AG04450 (cell line): ENCODE measurements at regions of chr18 and their contacts with region 1.

Region 1: GRCh38 chr18:12890506-12890905 is 6.5 kb upstream of the PTPN2 start:
- DNase-seq: no peak
- H3K4me3 ChIP-seq: no peak overlapping the region
- H3K27ac ChIP-seq: peak overlapping the region; percentile 11
- H3K27me3 ChIP-seq: peaks cover 3% of the 10 kb centered on the region
- CTCF ChIP-seq: no peak

Region 2: DNA sequence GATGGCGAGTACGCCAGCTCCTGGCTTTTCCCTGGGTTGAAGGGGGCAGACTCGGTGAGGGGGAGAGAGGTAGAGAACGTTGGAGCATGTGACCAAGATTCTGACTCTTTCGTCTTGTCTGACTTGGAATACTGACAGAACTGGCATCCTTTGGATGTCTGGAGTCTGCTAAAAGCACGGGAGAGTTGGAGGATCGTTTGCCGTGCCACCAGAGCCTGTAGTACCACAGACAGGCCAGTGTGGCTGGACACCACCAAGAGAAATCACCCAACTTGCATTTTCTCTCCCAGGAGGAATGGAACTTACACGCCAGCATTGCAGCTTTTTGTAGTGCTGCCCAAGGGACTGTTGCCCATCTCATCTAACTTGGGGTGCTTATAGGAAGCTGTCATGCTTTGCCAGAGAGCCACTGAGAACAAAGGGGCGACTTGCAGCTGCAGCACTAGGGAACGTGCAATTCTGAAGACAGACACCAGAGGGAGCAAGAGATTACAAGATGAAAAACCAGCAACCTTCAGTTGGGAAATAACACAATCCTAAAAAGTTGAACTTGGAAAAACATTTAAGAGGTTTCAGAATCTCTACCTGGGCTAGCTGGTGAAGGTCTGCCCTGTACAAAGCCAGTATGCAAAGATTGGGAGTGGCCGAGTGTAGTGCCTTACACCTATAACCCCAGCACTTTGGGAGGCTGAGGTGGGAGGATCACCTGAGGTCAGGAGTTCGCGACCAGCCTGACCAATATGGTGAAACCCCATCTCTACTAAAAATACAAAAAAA is 163.5 kb before region 1 on chr18:
- CTCF ChIA-PET with region 1: interaction called, 17 read pairs
- POLR2A ChIA-PET with region 1: no interaction called
- DNase-seq: peak; percentile 60
- H3K4me3 ChIP-seq: no peak overlapping the region
- H3K27ac ChIP-seq: no peak overlapping the region
- H3K27me3 ChIP-seq: no peaks in the 10 kb centered on the region
- CTCF ChIP-seq: peak; percentile 89

Region 3: DNA sequence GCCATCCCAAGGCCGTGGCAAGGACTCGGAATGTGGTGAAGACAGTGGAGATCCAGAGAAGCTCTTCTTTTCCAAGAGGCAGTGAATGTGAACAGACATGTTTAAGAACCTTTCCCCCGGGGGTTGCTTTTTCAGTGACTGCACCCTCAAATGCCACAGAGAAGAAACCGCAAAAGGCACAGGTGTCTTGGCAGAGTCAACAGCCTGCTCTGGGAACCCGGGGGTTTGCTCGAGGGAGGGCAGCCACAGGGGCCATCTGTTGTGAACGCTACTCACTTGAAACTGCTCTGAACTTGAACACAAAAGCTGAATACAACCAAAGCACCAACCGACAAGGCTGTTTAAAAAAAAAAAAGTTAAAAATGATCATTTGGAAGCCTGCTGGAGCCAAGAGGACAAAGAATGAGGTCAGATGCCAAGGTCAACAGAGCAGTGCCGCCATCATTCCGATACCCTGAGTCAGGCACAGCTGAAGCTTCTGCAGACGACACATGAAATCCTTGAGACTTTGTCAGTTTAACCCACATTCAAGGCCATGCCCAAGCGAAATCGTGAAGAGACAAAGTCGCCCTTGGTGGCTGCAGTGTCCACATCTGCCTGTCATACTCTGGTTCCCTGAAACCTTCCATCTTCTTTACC is 140.3 kb before region 1 on chr18:
- CTCF ChIA-PET with region 1: interaction called, 126 read pairs
- POLR2A ChIA-PET with region 1: no interaction called
- DNase-seq: no peak
- H3K4me3 ChIP-seq: no peak overlapping the region
- H3K27ac ChIP-seq: no peak overlapping the region
- H3K27me3 ChIP-seq: no peaks in the 10 kb centered on the region
- CTCF ChIP-seq: no peak

Region 4: DNA sequence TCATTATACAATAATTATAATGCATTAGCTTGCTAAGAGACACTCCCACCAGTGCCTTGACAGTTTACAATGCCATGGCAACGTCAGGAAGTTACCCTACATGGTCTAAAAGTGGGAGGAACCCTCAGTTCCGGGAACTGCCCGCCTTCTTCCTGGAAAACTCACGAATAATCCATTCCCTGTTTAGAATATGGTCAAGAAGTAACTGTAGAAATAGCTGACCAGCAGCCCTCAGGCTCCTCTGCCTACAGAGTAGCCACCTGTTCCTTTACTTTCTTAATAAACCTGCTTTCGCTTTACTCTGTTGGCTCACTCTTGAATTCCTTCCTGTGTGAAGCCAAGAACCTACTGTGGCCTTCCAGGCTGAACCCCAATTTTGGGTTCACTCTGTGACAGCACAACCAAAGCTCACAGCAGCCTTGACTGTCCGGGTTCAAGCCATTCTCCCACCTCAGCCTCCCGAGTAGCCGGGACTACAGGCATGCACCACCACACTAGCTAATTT is 13.6 kb after region 1 on chr18:
- CTCF ChIA-PET with region 1: interaction called, 20 read pairs
- POLR2A ChIA-PET with region 1: no interaction called
- DNase-seq: no peak
- H3K4me3 ChIP-seq: no peak overlapping the region
- H3K27ac ChIP-seq: no peak overlapping the region
- H3K27me3 ChIP-seq: peaks cover 11% of the 10 kb centered on the region
- CTCF ChIP-seq: no peak

Region 5: DNA sequence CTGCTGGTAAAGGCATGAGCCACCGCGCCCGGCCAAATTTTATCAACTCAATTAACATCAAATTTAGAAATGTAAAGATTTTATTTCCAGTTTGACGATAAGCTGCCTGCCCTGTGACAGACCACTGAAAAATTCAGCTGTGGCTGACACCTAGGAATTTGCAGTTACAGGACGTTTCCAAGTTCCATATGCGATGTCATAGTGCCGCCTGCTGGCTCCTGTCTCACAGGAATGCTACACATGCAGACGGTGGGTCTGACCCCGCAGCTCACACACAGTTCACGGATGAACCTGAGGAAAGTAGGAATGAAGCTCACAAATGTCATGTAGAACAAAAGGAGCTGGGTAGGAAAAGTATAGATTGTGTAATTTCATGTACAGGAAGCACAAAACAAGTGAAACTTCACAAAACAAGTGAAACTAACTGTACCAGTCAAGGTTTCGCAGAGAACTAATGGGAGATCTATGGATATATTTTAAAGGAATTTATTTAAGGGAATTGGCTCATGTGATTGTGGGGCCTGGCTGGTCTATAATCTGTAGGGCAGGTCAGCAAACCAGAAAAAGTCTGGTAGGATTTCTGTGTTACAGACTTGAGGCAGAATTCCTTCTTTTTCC is 44.1 kb after region 1 on chr18:
- CTCF ChIA-PET with region 1: interaction called, 12 read pairs
- POLR2A ChIA-PET with region 1: no interaction called
- DNase-seq: peak; percentile 63
- H3K4me3 ChIP-seq: no peak overlapping the region
- H3K27ac ChIP-seq: no peak overlapping the region
- H3K27me3 ChIP-seq: no peaks in the 10 kb centered on the region
- CTCF ChIP-seq: peak; percentile 97